Naive thymus-derived CD4-positive, alpha-beta T cell (primary cell): ENCODE measurements at regions of chr5 and their contacts with region 1.

Region 1: DNA sequence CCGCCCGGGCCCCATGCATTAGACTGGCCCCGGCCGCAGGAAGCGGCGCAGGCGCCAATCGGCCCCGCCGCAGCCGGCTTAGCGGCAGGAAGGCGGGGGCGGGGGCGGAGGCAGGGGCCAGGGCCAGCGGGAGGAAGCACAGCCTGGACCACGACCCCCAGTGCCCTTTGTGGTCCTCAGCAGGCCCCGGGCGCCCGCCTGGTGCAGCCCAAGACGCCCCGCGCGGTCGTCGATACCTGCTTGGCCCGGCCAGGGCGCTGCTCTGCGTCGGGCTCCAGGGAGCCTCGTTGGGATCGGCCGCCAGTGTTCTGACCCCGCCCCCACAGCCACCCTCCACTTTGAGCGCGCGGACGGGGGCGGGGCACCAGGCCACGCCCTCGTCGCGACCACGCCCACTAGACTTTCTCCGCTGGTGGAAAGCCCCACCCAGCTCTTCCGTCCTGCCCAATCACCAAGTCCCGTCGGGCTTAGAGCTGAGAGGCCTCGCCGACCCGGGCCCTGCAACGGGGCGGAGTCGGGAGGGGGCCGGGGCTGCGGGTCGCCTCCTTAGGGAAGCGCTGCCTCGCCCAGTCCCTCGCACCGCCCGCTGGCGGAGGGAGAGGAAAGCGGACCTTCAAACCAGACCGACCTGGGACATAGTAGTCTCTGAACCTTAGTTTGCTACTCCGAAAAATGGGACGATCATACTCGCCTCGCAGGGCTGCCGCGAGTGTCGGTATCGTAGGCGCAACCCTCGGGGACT is at the start of gene PDLIM7:
- DNase-seq: peak; percentile 88 to 97 (median 92)
- ATAC-seq: peak; percentile 92
- H3K4me3 ChIP-seq: peak within 1 kb of the TSS; percentile 77
- H3K4me3 Mint-ChIP-seq: peak within 1 kb of the TSS; percentile 77 to 90 (median 84)
- H3K27ac ChIP-seq: peak within 1 kb of the TSS; percentile 61
- H3K27ac Mint-ChIP-seq: peak within 1 kb of the TSS; percentile 28 to 77 (median 66)
- H3K4me1 ChIP-seq: peaks cover 7 to 10% of the 10 kb centered on the region in 2 donors
- H3K4me1 Mint-ChIP-seq: peaks cover 24 to 44% (median 28%) of the 10 kb centered on the region in 7 donors
- H3K27me3 ChIP-seq: no peaks in the 10 kb centered on the region
- H3K27me3 Mint-ChIP-seq: peaks cover 0 to 24% (median 0%) of the 10 kb centered on the region in 5 donors
- total RNA-seq, gene PDLIM7: 4.1 to 63.2 (median 11.9) TPM

Region 2: GRCh38 chr5:176886336-176887251 is 610.9 kb before region 1 on chr5:
- CTCF ChIA-PET with region 1: no interaction called
- POLR2A ChIA-PET with region 1: no interaction called
- intact Hi-C with region 1: no loop called
- DNase-seq: no peak
- ATAC-seq: no peak
- H3K4me3 ChIP-seq: no peak overlapping the region
- H3K4me3 Mint-ChIP-seq: no peak overlapping the region
- H3K27ac ChIP-seq: no peak overlapping the region
- H3K27ac Mint-ChIP-seq: no peak overlapping the region
- H3K4me1 ChIP-seq: no peaks in the 10 kb centered on the region
- H3K4me1 Mint-ChIP-seq: peaks cover 0 to 10% (median 6%) of the 10 kb centered on the region in 7 donors
- H3K27me3 ChIP-seq: no peaks in the 10 kb centered on the region
- H3K27me3 Mint-ChIP-seq: no peaks in the 10 kb centered on the region

Region 3: GRCh38 chr5:177311723-177312648 is 185.5 kb before region 1 on chr5 and contains the start of gene MXD3:
- CTCF ChIA-PET with region 1: interaction called, 17 read pairs
- POLR2A ChIA-PET with region 1: no interaction called
- intact Hi-C with region 1: loop called (anchors 1 to 2 kb)
- DNase-seq: peak; percentile 87 to 97 (median 92)
- ATAC-seq: peak; percentile 95
- H3K4me3 ChIP-seq: peak within 1 kb of the TSS; percentile 77
- H3K4me3 Mint-ChIP-seq: peak within 1 kb of the TSS; percentile 78 to 93 (median 84)
- H3K27ac ChIP-seq: peak within 1 kb of the TSS; percentile 51
- H3K27ac Mint-ChIP-seq: peak within 1 kb of the TSS in 6 of 9 donors; percentile 42 to 92 (median 59)
- H3K4me1 ChIP-seq: peaks cover 21 to 22% of the 10 kb centered on the region in 2 donors
- H3K4me1 Mint-ChIP-seq: peaks cover 11 to 49% (median 32%) of the 10 kb centered on the region in 7 donors
- H3K27me3 ChIP-seq: no peaks in the 10 kb centered on the region
- H3K27me3 Mint-ChIP-seq: peaks cover 0 to 5% (median 0%) of the 10 kb centered on the region in 5 donors
- total RNA-seq, gene MXD3: 8.8 to 39.8 (median 18.3) TPM

Region 4: DNA sequence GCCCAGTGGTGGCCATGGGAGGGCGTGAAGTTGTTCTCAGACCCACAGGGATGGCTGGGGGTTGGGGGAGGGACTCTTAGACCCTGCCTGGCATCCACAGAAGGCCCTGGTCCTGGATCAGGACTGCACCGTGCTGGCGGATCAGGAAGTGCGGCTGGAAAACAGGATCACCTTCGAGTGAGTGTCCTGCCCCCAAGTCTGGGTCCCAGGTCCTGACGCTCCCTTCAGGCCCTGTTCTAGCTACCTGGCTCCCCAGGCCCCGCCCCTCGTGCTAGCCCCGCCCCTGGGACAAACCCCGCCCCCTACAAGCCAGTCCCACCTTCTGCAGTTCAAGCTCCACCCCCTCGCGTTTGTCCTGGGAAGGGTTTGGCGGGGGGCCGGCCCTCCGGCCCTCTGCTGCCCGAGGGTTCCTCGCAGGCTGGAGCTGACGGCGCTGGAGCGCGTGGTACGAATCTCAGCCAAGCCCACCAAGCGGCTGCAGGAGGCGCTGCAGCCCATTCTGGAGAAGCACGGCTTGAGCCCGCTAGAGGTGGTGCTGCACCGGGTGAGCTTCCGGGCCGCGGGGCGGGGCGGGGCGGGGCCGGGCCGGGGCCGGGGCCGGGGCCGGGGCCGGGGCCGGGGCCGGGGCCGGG is 126.9 kb before region 1 on chr5:
- CTCF ChIA-PET with region 1: interaction called, 3 read pairs
- POLR2A ChIA-PET with region 1: no interaction called
- intact Hi-C with region 1: loop called in 1 of 2 experiments (anchors 1 kb)
- DNase-seq: peak in 7 of 9 donors; percentile 36 to 74 (median 65)
- ATAC-seq: peak; percentile 90
- H3K4me3 ChIP-seq: no peak overlapping the region
- H3K4me3 Mint-ChIP-seq: peak overlapping the region in 7 of 10 donors; percentile 20 to 79 (median 64)
- H3K27ac ChIP-seq: peak overlapping the region; percentile 76
- H3K27ac Mint-ChIP-seq: peak overlapping the region in 7 of 9 donors; percentile 33 to 94 (median 86)
- H3K4me1 ChIP-seq: peaks cover 36 to 73% of the 10 kb centered on the region in 2 donors
- H3K4me1 Mint-ChIP-seq: peaks cover 51 to 80% (median 70%) of the 10 kb centered on the region in 7 donors
- H3K27me3 ChIP-seq: no peaks in the 10 kb centered on the region
- H3K27me3 Mint-ChIP-seq: no peaks in the 10 kb centered on the region

Region 5: GRCh38 chr5:177473461-177474001 is 23.9 kb before region 1 on chr5 and contains the start of gene DBN1:
- CTCF ChIA-PET with region 1: interaction called, 9 read pairs
- POLR2A ChIA-PET with region 1: interaction called, 5 read pairs
- intact Hi-C with region 1: loop called (anchors 1 to 2 kb)
- DNase-seq: no peak
- ATAC-seq: peak; percentile 49
- H3K4me3 ChIP-seq: peak within 1 kb of the TSS; percentile 43
- H3K4me3 Mint-ChIP-seq: peak within 1 kb of the TSS; percentile 55 to 88 (median 82)
- H3K27ac ChIP-seq: peak within 1 kb of the TSS; percentile 21
- H3K27ac Mint-ChIP-seq: peak within 1 kb of the TSS in 6 of 9 donors; percentile 59 to 84 (median 78)
- H3K4me1 ChIP-seq: peaks cover 9 to 24% of the 10 kb centered on the region in 2 donors
- H3K4me1 Mint-ChIP-seq: peaks cover 20 to 45% (median 37%) of the 10 kb centered on the region in 7 donors
- H3K27me3 ChIP-seq: no peaks in the 10 kb centered on the region
- H3K27me3 Mint-ChIP-seq: peaks cover 0 to 9% (median 0%) of the 10 kb centered on the region in 5 donors
- total RNA-seq, gene DBN1: 1.2 to 8.8 (median 5.7) TPM

Region 6: DNA sequence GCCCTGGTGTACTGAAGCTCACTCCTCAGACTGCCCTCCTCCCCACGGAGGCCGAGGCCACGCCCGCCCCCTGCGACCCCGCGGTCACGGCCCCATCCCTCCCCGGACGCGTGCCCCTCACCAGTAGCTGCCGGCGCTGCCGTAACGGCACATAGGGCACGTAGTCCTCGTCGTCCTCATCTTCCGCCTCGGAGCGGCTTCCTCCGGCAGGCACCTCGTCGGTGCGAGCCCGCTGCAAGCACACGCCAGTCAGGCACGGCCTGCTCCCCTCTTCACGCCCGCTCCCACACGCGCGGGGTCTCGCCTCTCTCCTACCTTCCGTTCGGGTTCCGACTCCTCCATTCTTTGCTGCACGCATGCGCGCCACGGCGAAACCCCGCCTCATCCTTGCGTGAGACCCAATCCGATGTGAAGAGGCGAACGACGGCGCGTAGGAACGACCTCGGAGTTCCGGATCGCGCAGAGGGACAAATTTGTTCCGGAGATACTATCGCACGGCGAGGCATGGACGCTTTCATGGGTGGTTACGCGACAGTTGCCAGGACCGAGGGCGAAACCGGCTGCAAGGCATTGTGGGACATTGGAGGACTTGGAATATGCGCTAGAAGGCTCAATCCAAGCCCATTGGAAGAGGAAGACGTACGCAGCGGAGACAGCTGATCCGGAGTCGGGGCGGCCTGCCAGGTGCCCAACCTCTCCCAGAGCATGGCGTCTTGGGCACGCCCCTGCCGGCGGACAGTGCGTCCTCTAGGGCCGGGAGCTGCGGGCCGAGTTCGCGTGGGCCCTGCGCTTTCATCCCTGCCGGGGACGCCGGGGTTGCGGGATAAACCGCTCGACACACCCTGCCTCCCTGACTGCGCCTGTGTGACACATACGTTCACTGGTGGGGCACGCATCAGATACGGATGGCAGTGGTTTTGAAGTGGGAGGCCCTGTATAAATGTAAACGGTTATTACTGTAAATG is 19.4 kb after region 1 on chr5 and contains the start of gene DDX41:
- CTCF ChIA-PET with region 1: interaction called, 8 read pairs
- POLR2A ChIA-PET with region 1: interaction called, 5 read pairs
- intact Hi-C with region 1: loop called (anchors 1 kb)
- DNase-seq: peak; percentile 88 to 96 (median 95)
- ATAC-seq: peak; percentile 92
- H3K4me3 ChIP-seq: peak within 1 kb of the TSS; percentile 76
- H3K4me3 Mint-ChIP-seq: peak within 1 kb of the TSS; percentile 92 to 99 (median 96)
- H3K27ac ChIP-seq: peak within 1 kb of the TSS; percentile 79
- H3K27ac Mint-ChIP-seq: peak within 1 kb of the TSS; percentile 85 to 97 (median 92)
- H3K4me1 ChIP-seq: peaks cover 15 to 17% of the 10 kb centered on the region in 2 donors
- H3K4me1 Mint-ChIP-seq: peaks cover 42 to 58% (median 52%) of the 10 kb centered on the region in 7 donors
- H3K27me3 ChIP-seq: no peaks in the 10 kb centered on the region
- H3K27me3 Mint-ChIP-seq: peaks cover 0 to 2% (median 0%) of the 10 kb centered on the region in 5 donors
- total RNA-seq, gene DDX41: 65.8 to 126 (median 76.1) TPM